Ascending aorta (tissue), 2 donors: ENCODE measurements at regions of chr5 and their contacts with region 1.

Region 1: DNA sequence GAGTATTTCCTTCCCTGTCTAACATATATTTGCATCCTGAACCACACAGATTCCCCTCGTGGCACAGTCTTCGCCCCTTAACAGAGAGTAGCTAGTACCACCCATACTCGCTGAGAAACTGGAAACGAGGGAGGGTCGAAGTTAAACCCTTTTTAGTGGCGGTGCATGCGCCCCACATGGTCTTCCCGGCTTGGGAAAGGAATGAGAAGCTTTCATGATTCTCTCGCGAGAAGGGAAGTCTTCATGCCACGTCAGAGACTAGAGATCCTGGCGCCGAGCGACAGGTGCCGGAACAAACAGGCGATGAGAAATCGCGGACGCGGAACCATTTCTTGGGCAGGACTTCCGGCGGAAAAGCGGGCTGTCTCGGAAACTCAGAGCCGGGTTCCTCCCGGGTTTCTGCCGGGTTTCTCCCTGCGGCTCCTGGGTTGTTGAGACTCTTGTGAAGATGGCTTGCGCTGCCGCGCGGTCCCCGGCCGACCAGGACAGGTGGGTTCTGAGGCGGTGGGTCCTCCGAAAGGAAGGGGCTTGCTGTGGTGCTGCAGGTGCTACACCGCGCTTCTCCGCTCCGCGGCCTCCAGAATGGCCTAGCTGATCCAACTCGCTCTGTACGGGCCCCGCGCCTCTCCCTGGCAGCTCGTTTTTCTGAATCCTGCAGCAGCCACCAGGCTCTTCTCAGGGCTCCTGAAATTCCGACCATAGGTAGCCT is at the start of gene SRP19:
- DNase-seq: peak; percentile 78 to 97
- H3K4me3 ChIP-seq: peak within 1 kb of the TSS; percentile 92 to 98
- H3K27ac ChIP-seq: peak within 1 kb of the TSS; percentile 77 to 87
- H3K4me1 ChIP-seq: peaks cover 0 to 14% of the 10 kb centered on the region in 2 donors
- H3K27me3 ChIP-seq: no peaks in the 10 kb centered on the region
- CTCF ChIP-seq: no peak
- total RNA-seq, gene SRP19: 76.6 TPM

Region 2: GRCh38 chr5:112684737-112685136 is 176.3 kb before region 1 on chr5:
- intact Hi-C with region 1: loop called (anchors 10 kb)
- DNase-seq: peak in 1 of 2 donors; percentile 74
- H3K4me3 ChIP-seq: no peak overlapping the region
- H3K27ac ChIP-seq: peak overlapping the region; percentile 71 to 73
- H3K4me1 ChIP-seq: peaks cover 0 to 17% of the 10 kb centered on the region in 2 donors
- H3K27me3 ChIP-seq: no peaks in the 10 kb centered on the region
- CTCF ChIP-seq: no peak

Region 3: DNA sequence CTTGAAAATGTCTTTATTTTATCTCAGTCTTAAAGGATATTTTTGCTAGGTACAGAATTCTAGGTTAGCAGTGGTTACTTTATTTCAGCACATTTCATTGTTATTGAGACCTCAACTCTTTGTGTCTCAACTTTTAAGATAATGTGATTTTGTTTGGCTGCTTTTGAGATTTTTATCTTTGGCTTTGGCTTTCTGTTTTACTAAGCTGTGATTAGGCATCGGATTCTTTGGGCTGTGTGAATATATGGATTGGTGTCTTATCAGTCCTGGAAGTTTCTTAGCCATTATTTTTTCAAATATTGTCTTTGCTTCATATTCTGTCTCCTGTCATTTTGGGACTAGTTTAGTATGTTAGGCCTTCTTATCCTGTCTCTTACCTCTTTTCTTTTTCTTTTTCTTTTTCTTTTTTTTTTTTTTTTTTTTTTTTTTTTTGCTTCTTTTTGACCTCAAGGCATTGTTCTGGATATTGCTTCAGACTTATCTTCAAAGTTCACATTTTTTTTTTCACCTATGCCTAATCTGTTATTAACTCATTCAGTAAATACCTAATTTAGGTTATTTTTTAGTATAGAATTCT is 143.5 kb before region 1 on chr5:
- intact Hi-C with region 1: no loop called
- DNase-seq: no peak
- H3K4me3 ChIP-seq: no peak overlapping the region
- H3K27ac ChIP-seq: no peak overlapping the region
- H3K4me1 ChIP-seq: no peaks in the 10 kb centered on the region
- H3K27me3 ChIP-seq: no peaks in the 10 kb centered on the region
- CTCF ChIP-seq: no peak

Region 4: DNA sequence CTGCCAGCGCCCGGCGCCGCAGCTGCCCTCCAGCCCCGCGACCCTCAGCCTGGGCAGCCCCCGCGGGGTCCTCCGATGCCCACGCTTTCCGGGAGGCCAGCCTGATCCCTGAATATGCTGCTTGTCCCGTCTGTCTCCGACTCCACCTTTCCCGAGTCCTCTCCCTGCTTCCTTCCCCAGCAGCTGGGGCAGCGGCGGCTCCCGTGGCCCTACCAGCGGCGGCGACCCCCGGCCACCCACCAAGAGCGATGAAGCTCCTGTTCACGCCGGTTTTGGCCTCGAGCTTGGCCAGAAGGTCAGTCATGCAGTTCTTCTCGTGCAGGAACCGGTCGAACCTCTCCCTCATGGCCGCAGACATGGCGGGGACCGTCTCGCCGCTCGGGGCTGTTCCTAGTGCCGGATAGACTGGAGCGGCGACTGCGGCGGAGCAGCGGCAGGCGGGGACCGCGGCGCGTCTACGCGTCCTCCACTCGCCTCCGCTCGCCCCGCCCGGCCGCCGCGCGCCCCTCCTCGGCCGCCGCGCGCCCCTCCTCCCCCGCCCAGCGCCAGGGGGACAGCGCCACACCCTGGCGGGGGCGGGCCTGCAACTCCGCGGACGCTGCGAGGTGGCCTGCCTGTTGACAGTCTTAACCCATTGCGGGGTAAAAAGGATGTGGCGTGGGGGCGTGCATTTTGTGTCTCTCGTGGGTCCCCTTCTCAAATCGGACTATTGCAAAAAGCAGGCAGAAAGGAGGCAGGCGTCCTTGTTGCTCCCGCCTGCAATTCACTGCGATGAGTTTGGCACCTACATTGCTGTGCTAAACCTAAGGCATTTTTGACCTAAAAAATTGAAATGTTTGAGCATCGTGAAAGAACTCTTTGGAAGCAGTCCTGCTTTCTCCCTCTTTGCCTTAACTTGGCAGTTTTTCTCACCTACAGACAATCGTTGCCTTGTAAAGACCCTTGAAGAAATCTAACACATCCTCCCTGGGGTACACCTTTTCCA is 61.0 kb after region 1 on chr5 and contains the start of gene REEP5:
- intact Hi-C with region 1: loop called (anchors 1 kb)
- DNase-seq: peak; percentile 40 to 90
- H3K4me3 ChIP-seq: peak within 1 kb of the TSS; percentile 93 to 94
- H3K27ac ChIP-seq: peak within 1 kb of the TSS; percentile 97 to 99
- H3K4me1 ChIP-seq: peaks cover 8 to 33% of the 10 kb centered on the region in 2 donors
- H3K27me3 ChIP-seq: no peaks in the 10 kb centered on the region
- CTCF ChIP-seq: peak; percentile 40 to 90 (median 59)
- total RNA-seq, gene REEP5: 49.7 TPM

Region 5: GRCh38 chr5:112960315-112960714 is 99.2 kb after region 1 on chr5:
- intact Hi-C with region 1: loop called (anchors 5 kb)
- DNase-seq: no peak
- H3K4me3 ChIP-seq: no peak overlapping the region
- H3K27ac ChIP-seq: no peak overlapping the region
- H3K4me1 ChIP-seq: peaks cover 0 to 30% of the 10 kb centered on the region in 2 donors
- H3K27me3 ChIP-seq: no peaks in the 10 kb centered on the region
- CTCF ChIP-seq: no peak